ENCODE measurements at regions of chr1 and their contacts with region 1.

Region 1: DNA sequence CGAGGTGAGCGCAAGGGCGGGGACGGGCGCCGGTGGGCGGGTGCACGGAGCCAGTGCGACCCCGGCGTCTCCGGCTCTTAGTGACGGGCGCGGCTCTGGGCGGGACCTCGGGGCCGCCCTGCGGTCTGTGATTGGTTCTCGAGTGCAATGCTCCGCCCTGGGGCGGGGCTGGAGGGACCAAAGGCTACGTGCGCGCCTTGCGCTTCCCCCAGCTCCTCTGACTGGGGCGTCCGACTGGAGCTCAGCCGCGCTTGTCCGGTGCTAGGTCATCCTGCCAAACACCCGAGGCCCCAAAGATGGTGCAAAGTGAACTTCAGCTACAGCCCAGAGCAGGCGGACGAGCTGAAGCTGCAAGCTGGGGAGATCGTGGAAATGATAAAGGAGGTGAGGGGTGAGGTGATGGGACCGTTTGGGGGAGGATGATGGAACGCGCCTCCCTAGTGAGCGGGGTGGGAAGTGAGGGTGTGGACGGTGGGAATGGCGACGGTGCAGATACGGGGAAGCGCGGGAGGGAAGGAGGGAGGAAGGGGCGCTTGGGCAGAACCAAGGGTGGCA is 811 bp downstream of the SH3D21 start:
- DNase-seq: peak; percentile 93
- H3K4me3 Mint-ChIP-seq: peak overlapping the region; percentile 89
- H3K27ac Mint-ChIP-seq: peak overlapping the region; percentile 81
- H3K4me1 Mint-ChIP-seq: peaks cover 40% of the 10 kb centered on the region
- H3K27me3 Mint-ChIP-seq: no peaks in the 10 kb centered on the region

Region 2: GRCh38 chr1:36279110-36279788 is 27.7 kb before region 1 on chr1:
- CTCF ChIA-PET with region 1: no interaction called
- POLR2A ChIA-PET with region 1: no interaction called
- DNase-seq: no peak
- H3K4me3 Mint-ChIP-seq: no peak overlapping the region
- H3K27ac Mint-ChIP-seq: no peak overlapping the region
- H3K4me1 Mint-ChIP-seq: peaks cover 24% of the 10 kb centered on the region
- H3K27me3 Mint-ChIP-seq: no peaks in the 10 kb centered on the region

Region 3: GRCh38 chr1:36323597-36324352 is 16.8 kb after region 1 on chr1 and contains the start of gene EVA1B:
- CTCF ChIA-PET with region 1: interaction called, 9 read pairs
- POLR2A ChIA-PET with region 1: interaction called, 32 read pairs
- DNase-seq: peak; percentile 72
- H3K4me3 Mint-ChIP-seq: peak within 1 kb of the TSS; percentile 75
- H3K27ac Mint-ChIP-seq: peak within 1 kb of the TSS; percentile 64
- H3K4me1 Mint-ChIP-seq: peaks cover 52% of the 10 kb centered on the region
- H3K27me3 Mint-ChIP-seq: peaks cover 7% of the 10 kb centered on the region
- total RNA-seq, gene EVA1B: 25.5 to 28.7 TPM

Region 4: DNA sequence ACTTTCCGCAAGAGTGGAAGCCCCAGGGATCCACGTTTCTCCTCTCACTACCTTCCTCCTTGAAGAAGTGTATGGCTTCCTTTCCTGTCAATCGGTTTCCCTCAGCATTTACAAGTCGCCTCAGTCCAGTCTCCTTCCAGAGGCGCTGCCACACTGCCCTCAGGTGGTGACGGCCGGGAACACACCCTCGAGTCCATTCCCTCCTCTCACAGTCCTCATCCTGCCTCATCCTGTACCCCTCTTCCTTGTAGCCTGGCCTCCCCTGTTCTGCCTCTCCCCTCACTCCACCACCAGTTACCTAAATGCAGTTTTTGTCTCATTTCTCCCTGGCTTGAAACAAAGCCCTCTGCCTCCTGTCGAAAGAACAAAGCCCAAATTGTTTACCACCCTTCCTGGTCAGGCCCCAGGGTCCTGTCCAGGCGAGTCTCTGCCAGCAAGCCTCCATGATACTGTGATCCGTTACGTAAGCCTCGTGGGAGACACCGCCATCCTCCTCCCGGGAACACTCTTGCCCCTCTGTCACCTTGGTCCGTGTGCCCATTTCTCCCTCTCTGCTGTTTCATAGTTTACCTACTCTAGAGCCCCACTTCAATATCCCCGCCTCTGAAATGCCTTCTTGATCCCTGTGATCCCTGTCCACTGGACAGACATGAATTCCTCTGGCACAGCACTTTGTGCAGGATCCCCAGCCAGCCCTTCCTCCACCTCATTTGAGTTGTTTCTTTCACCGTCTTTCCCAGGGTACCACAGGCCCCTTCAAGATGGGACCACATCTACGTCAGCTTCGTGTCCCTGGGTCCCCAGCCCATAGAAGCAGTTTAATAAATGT is 114.1 kb after region 1 on chr1:
- CTCF ChIA-PET with region 1: interaction called, 10 read pairs
- POLR2A ChIA-PET with region 1: no interaction called
- DNase-seq: peak; percentile 93
- H3K4me3 Mint-ChIP-seq: no peak overlapping the region
- H3K27ac Mint-ChIP-seq: peak overlapping the region; percentile 73
- H3K4me1 Mint-ChIP-seq: peaks cover 20% of the 10 kb centered on the region
- H3K27me3 Mint-ChIP-seq: no peaks in the 10 kb centered on the region

Measured in activated CD4-positive, alpha-beta memory T cell treated with anti-CD3 and anti-CD28 coated beads, Interleukin-2, amount 10 ng/mL, durations not matched to agents 7 days and 5 days (primary cell).